Spleen (tissue), 13 donors: ENCODE measurements at regions of chr9 and their contacts with region 1.

Region 1: DNA sequence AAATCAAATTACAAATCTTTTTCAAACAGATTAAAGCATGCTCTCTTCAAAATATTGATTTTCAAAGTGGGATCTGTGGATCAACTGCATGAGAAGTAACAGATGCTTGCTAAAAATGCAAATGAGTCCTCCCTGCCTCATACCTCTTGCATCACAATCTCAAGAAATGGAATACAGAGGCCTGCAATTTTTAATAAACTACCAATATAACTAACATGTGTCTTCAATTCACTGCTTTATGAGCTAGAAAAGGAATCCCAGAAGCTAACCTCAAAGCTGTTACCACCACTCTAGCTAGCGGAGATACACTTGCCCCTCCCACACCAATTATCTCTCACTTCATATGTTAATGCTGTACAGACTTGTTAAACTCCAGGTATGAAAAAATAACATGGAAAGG is 9.6 kb downstream of the OR13C5 start:
- DNase-seq: no peak
- H3K4me3 ChIP-seq: no peak overlapping the region
- H3K27ac ChIP-seq: no peak overlapping the region
- H3K4me1 ChIP-seq: no peaks in the 10 kb centered on the region
- H3K27me3 ChIP-seq: no peaks in the 10 kb centered on the region
- CTCF ChIP-seq: no peak
- POLR2A ChIP-seq: no peak

Region 2: DNA sequence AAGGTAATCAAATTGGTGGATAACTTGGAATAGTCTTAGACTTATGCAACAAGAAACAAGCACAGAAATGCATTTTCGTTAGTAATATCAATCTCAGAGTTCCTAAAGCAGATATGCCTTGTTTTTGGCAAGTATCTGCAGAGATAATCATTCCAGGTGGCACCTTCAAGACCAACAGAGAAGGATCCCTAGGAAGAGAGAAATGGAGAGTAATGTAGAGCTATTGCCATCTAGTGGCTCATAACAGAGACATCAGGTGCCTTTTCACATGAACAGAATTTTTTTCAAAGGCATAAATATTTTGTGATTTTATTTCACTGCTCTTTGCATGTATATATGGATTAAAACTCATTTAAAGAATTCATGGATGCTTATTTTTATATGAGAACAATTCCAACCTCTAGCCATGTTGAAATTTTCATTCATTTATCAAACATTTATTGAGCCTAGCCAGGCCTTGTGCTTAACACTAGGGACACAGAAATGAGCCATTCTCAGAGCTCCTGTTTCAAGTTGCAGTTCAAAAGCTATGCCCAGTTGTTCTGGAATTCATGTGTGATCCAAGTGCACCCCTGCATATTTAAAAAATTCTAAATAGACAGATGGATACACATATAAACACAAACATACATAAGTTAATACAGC is 203.1 kb before region 1 on chr9:
- intact Hi-C with region 1: no loop called
- DNase-seq: no peak
- H3K4me3 ChIP-seq: no peak overlapping the region
- H3K27ac ChIP-seq: no peak overlapping the region
- H3K4me1 ChIP-seq: no peaks in the 10 kb centered on the region
- H3K27me3 ChIP-seq: peaks cover 0 to 3% (median 0%) of the 10 kb centered on the region in 7 donors
- CTCF ChIP-seq: peak in 7 of 11 experiments; percentile 16 to 50 (median 36)
- POLR2A ChIP-seq: no peak

Region 3: DNA sequence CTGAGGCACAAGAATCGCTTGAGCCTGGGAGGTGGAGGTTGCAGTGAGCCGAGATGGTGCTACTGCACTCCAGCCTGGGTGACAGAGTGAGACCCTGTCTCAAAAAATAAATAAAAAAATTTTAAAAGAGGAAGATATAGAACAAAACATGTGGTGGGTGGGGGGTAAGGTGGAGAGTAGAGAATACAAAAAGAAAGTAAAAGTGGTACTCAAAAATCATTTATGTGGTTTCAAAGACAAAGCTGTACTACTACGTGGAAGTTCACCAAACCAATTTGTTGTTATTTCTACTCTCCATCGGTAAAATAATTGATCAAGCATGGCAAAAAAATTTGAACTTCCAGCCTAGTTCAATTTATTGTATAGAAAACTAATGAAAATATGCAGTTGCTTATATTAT is 45.0 kb before region 1 on chr9:
- intact Hi-C with region 1: loop called (anchors 10 kb)
- DNase-seq: no peak
- H3K4me3 ChIP-seq: no peak overlapping the region
- H3K27ac ChIP-seq: no peak overlapping the region
- H3K4me1 ChIP-seq: no peaks in the 10 kb centered on the region
- H3K27me3 ChIP-seq: no peaks in the 10 kb centered on the region
- CTCF ChIP-seq: no peak
- POLR2A ChIP-seq: no peak